ENCODE measurements at regions of chr1 and their contacts with region 1.

Region 1: DNA sequence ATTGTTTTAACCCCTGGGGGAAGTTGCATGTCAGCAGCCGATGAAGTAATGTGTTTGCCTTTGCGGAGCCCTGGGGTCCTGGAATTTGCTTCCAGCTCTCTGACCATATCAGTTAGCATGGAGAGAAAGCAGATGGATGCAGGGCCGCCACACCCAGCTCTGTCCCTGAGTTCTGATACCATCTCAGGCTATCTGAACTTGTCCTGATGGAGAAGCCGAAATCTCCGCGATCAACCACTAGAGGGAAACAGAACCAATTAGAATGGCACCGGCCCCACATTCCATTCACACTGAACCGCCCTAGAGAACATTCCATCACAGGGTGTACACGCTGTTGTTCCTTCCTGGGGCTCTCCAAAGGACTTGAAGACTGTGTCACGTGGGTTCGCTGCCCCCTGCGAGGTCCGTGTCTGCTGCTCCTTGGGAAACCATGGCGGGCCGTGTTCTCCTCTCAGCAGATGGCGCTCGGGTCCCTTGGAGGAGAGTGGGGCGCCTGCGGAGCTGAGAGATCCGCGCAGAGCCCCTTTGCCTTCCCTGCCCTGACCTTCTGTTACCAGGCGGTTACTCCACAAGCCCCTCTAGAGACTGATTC is 75.4 kb downstream of the ABCA4 start:
- DNase-seq: peak; percentile 79

Region 2: GRCh38 chr1:93938466-93939145 is 107.0 kb before region 1 on chr1:
- CTCF ChIA-PET with region 1: no interaction called
- POLR2A ChIA-PET with region 1: no interaction called
- DNase-seq: no peak

Region 3: GRCh38 chr1:94068999-94069918 is 23.7 kb after region 1 on chr1:
- CTCF ChIA-PET with region 1: no interaction called
- POLR2A ChIA-PET with region 1: no interaction called
- DNase-seq: peak; percentile 41

Region 4: GRCh38 chr1:94130851-94131595 is 85.5 kb after region 1 on chr1:
- CTCF ChIA-PET with region 1: no interaction called
- POLR2A ChIA-PET with region 1: no interaction called
- DNase-seq: no peak

Region 5: DNA sequence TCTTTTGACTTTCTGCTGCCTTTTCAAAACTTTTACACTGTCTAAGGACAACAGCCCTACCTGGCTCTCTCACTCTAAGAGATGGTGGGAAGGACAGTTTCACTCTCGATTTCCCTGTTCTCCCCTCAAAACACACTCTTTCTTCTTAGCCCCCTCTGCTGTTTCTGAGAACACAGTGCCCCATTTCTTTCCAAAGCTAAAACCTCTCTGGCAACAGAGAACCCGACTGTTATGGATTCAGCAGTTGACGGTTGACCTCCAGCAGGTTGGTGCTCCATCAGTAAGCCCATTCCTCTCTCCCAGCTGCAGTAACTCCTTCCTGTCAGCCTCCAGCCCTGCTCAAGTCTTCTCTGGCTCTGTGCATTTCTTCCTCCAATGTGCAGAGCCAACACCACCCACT is 284.4 kb after region 1 on chr1:
- CTCF ChIA-PET with region 1: interaction called, 55 read pairs
- POLR2A ChIA-PET with region 1: no interaction called
- DNase-seq: no peak